Right cardiac atrium (tissue), 5 donors: ENCODE measurements at regions of chr17 and their contacts with region 1.

Region 1: GRCh38 chr17:68205251-68205807 is 42.5 kb upstream of the AMZ2 start:
- DNase-seq: peak; percentile 92 to 98 (median 97)
- ATAC-seq: peak; percentile 95 to 96
- H3K4me3 ChIP-seq: peak overlapping the region; percentile 81
- H3K27ac ChIP-seq: peak overlapping the region; percentile 85
- H3K4me1 ChIP-seq: no peaks in the 10 kb centered on the region
- H3K27me3 ChIP-seq: no peaks in the 10 kb centered on the region

Region 2: GRCh38 chr17:68247445-68248198 is 42.3 kb after region 1 on chr17 and contains the start of gene AMZ2:
- intact Hi-C with region 1: loop called in 2 of 4 experiments (anchors 5 kb)
- DNase-seq: peak; percentile 95 to 99 (median 98)
- ATAC-seq: peak; percentile 99
- H3K4me3 ChIP-seq: peak within 1 kb of the TSS; percentile 57
- H3K27ac ChIP-seq: peak within 1 kb of the TSS; percentile 81
- H3K4me1 ChIP-seq: peaks cover 2% of the 10 kb centered on the region
- H3K27me3 ChIP-seq: no peaks in the 10 kb centered on the region
- total RNA-seq, gene AMZ2: 73.9 to 98.3 (median 93.0) TPM